Prostate gland (tissue), 2 donors: ENCODE measurements at regions of chr7 and their contacts with region 1.

Region 1: GRCh38 chr7:32347244-32347828 is 142.8 kb downstream of the LSM5 start:
- DNase-seq: no peak
- H3K4me3 ChIP-seq: no peak overlapping the region
- H3K27ac ChIP-seq: no peak overlapping the region
- H3K4me1 ChIP-seq: no peaks in the 10 kb centered on the region
- H3K27me3 ChIP-seq: no peaks in the 10 kb centered on the region
- CTCF ChIP-seq: peak; percentile 23 to 40 (median 29)
- POLR2A ChIP-seq: no peak

Region 2: GRCh38 chr7:32218154-32218467 is 129.2 kb before region 1 on chr7:
- intact Hi-C with region 1: loop called (anchors 10 kb)
- DNase-seq: no peak
- H3K4me3 ChIP-seq: no peak overlapping the region
- H3K27ac ChIP-seq: no peak overlapping the region
- H3K4me1 ChIP-seq: no peaks in the 10 kb centered on the region
- H3K27me3 ChIP-seq: no peaks in the 10 kb centered on the region
- CTCF ChIP-seq: no peak
- POLR2A ChIP-seq: no peak

Region 3: DNA sequence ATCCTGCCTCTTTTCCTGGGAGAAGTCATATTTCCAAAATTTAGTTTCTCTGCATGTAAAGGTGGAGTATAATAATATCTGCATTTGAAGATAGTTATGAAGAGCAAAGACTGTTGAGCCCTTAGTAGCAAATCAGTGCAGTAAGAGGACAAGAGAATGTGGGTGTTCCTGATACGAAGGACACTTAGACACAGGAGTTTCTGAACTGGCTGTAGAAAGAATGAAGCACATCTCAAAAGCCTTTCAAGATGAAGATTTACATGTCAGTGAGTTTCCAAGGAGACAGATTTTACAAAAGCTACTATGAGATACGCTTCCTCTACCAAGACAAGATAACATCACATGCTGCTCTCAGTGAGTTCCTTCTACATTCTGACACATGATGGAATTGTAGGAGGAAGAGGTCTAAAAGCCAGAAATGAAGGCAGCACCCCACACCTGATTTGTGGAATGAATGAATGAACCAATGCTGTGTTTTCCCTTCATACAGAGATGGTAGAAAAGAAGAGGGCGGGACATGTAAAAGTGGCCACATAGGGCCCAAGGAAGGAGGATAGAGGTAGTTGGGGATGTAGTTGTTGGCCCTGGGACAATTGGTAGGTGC is 103.5 kb before region 1 on chr7:
- intact Hi-C with region 1: no loop called
- DNase-seq: no peak
- H3K4me3 ChIP-seq: no peak overlapping the region
- H3K27ac ChIP-seq: no peak overlapping the region
- H3K4me1 ChIP-seq: no peaks in the 10 kb centered on the region
- H3K27me3 ChIP-seq: no peaks in the 10 kb centered on the region
- CTCF ChIP-seq: no peak
- POLR2A ChIP-seq: no peak